ENCODE measurements at regions of chr16 and their contacts with region 1.

Region 1: DNA sequence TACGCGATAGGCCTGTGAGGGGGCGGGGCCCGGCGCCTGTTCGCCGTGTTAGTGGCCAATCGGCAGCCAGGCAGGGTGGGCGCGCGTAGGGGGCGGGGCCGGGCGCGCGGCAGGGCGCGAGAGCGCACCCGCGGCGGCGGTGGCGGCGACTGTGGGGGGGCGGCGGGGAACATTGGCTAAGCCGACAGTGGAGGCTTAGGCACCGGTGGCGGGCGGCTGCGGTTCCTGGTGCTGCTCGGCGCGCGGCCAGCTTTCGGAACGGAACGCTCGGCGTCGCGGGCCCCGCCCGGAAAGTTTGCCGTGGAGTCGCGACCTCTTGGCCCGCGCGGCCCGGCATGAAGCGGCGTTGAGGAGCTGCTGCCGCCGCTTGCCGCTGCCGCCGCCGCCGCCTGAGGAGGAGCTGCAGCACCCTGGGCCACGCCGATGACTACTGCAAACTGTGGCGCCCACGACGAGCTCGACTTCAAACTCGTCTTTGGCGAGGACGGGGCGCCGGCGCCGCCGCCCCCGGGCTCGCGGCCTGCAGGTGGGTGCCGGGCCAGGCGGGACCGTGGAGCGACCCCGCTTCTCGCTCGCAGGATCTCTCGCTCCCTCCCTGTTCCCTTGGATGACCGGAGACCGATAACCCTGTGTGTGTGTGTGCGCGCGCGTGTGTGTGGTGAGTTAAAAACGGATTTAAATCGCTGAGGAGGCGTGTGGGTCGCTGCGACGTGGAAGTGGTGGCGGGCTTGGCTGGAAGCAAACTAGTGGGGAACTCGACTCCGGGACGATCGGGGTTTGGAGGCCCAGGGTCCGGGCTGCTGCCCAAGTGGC is at the start of gene NFATC3:
- DNase-seq: peak; percentile 99
- H3K4me3 Mint-ChIP-seq: peak within 1 kb of the TSS; percentile 86
- H3K27ac Mint-ChIP-seq: peak within 1 kb of the TSS; percentile 98
- H3K4me1 Mint-ChIP-seq: peaks cover 62% of the 10 kb centered on the region
- H3K27me3 Mint-ChIP-seq: no peaks in the 10 kb centered on the region
- total RNA-seq, gene NFATC3: 83.4 to 85.2 TPM

Region 2: DNA sequence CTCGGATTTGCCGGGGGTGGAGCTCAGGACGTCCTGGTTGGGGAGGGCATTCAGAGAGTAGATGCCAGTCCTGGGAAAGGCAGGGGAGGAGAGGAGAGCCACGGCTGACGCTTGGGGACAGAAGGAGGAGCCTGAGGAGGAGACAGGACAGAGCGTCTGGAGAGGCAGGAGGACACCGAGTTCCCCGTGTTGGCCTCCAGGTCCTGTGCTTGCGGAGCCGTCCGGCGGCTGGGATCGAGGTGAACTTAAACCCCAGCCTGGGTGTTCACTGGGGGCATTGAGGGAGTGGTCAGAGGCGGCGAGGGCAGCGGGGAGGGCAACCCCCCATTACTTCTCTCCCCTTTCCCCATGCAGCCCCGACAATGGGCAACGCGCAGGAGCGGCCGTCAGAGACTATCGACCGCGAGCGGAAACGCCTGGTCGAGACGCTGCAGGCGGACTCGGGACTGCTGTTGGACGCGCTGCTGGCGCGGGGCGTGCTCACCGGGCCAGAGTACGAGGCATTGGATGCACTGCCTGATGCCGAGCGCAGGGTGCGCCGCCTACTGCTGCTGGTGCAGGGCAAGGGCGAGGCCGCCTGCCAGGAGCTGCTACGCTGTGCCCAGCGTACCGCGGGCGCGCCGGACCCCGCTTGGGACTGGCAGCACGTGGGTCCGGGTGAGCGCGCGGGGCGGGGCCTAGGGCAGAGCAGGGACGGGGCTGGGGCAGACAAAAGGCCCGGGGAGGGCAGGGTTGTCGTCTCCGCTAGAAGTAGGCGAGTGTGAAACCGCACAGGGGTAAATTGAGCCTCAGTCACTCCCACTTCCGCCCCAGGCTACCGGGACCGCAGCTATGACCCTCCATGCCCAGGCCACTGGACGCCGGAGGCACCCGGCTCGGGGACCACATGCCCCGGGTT is 911.4 kb before region 1 on chr16:
- CTCF ChIA-PET with region 1: no interaction called
- POLR2A ChIA-PET with region 1: no interaction called
- intact Hi-C with region 1: loop called (anchors 10 kb)
- DNase-seq: peak; percentile 79
- H3K4me3 Mint-ChIP-seq: peak overlapping the region; percentile 64
- H3K27ac Mint-ChIP-seq: no peak overlapping the region
- H3K4me1 Mint-ChIP-seq: peaks cover 42% of the 10 kb centered on the region
- H3K27me3 Mint-ChIP-seq: peaks cover 25% of the 10 kb centered on the region

Region 3: DNA sequence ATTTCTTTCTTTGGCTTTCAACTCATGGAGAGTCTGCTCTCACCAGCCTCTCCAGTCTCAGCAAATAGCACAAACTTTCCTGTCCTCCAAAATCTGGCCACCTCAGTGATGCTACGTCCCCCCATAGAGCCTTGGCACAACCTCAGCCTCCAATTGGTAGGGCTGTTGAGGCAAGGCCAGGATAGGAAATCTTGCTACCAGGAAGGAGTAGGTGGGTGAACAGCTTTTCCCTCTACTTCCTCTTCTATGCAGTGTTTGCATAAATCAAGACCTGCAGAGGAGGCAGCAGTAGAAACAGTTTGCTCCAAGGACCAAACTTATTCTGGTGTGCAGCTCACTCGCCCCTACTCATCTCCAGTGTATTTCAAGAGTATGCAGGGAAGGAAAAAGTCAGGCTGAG is 85.5 kb before region 1 on chr16:
- CTCF ChIA-PET with region 1: interaction called, 3 read pairs
- POLR2A ChIA-PET with region 1: interaction called, 5 read pairs
- intact Hi-C with region 1: loop called (anchors 5 kb)
- DNase-seq: no peak
- H3K4me3 Mint-ChIP-seq: peak overlapping the region; percentile 72
- H3K27ac Mint-ChIP-seq: peak overlapping the region; percentile 88
- H3K4me1 Mint-ChIP-seq: peaks cover 52% of the 10 kb centered on the region
- H3K27me3 Mint-ChIP-seq: no peaks in the 10 kb centered on the region

Region 4: GRCh38 chr16:68074850-68075555 is 10.5 kb before region 1 on chr16:
- CTCF ChIA-PET with region 1: interaction called, 12 read pairs
- POLR2A ChIA-PET with region 1: interaction called, 23 read pairs
- intact Hi-C with region 1: loop called (anchors 1 kb)
- DNase-seq: peak; percentile 84
- H3K4me3 Mint-ChIP-seq: no peak overlapping the region
- H3K27ac Mint-ChIP-seq: peak overlapping the region; percentile 87
- H3K4me1 Mint-ChIP-seq: peaks cover 76% of the 10 kb centered on the region
- H3K27me3 Mint-ChIP-seq: no peaks in the 10 kb centered on the region

Region 5: DNA sequence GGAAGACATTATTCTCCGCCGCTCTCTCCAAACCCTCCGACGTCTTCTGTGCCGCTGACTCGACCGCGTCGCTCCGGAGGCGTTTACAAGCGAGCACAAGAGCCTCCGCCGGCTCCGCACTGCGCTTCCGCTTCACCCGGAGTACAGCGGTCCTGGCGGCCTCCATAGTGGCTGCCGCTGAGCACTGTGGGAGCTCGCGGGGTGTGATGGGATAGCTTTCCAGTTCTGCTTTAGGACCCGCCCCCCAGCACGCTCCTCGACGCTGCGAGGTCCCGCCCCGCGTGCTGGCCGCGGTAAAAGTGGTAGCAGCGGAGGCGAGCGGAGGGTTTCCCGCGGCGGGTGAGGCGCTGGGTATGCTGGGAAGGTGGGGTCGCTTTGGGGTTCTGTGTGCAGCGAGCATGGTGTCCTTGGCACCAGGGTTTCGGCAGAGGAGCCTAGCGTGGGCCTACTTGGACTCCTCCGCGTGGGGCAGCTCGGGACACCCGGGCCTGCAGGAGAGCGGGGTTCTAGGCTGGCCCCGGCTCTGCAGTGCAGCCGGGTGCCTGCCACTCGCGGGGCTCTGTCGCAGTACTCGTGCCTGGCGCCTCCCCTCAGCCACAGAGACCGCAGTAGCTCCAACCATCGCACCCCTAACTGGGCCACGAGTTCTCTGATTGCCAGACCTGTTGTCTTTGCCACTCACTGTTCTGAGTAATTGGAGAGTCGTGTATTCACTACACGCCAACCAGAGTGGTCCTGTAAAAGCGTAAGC is 225.5 kb after region 1 on chr16 and contains the starts of genes PRMT7 and SLC7A6OS:
- CTCF ChIA-PET with region 1: no interaction called
- POLR2A ChIA-PET with region 1: no interaction called
- intact Hi-C with region 1: loop called (anchors 2 kb)
- DNase-seq: peak; percentile 96
- H3K4me3 Mint-ChIP-seq: peak within 1 kb of the TSS; percentile 89
- H3K27ac Mint-ChIP-seq: peak within 1 kb of the TSS; percentile 93
- H3K4me1 Mint-ChIP-seq: peaks cover 52% of the 10 kb centered on the region
- H3K27me3 Mint-ChIP-seq: no peaks in the 10 kb centered on the region
- total RNA-seq, gene PRMT7: 60.4 to 62.8 TPM
- total RNA-seq, gene SLC7A6OS: 20.6 to 22.2 TPM